Cardiac septum (tissue), 1 donor: ENCODE measurements at regions of chr21 and their contacts with region 1.

Region 1: GRCh38 chr21:42892931-42893755 is at the start of gene NDUFV3:
- DNase-seq: peak; percentile 100
- total RNA-seq, gene NDUFV3: 46.7 TPM

Region 2: DNA sequence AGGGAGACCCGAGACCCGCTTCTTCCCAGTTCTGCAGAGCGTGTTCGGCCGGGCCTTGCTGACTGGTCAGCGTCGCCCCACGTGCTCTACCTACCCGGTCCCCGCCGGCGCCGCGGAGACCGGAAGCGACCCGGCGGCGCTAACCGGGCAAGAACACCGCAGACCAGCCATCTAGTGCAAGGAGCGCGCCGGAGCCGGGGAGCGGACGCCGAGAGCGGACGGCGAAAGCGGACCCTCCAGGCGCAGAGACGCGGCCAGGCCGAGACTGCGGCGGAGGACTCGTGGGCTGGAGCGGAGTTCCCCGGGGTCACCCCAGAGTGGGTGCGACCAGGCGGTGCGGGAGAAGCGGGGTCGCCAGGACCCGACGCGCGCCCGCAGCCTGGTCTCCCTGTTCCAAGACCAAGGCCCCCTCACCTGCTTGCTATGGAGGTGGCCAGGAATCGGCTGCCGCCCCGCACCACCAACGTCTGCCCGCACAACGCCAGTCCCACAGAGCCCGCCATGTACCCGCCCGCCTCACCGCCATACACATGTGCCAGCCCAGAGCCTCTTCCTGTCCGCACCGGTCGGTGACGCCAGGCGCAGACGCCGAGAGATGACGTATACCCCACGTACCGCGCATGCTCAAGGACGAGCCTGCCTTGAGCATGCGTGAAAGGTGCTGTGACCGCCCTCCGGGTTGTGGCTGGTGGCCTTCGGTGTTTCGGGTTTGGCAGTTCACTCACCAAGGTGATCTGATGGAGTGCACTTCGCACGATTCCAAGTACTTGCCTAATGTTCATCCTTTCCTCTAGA is 14.0 kb before region 1 on chr21 and contains the start of gene WDR4:
- intact Hi-C with region 1: loop called (anchors 2 kb)
- DNase-seq: peak; percentile 98
- total RNA-seq, gene WDR4: 8.6 TPM

Region 3: DNA sequence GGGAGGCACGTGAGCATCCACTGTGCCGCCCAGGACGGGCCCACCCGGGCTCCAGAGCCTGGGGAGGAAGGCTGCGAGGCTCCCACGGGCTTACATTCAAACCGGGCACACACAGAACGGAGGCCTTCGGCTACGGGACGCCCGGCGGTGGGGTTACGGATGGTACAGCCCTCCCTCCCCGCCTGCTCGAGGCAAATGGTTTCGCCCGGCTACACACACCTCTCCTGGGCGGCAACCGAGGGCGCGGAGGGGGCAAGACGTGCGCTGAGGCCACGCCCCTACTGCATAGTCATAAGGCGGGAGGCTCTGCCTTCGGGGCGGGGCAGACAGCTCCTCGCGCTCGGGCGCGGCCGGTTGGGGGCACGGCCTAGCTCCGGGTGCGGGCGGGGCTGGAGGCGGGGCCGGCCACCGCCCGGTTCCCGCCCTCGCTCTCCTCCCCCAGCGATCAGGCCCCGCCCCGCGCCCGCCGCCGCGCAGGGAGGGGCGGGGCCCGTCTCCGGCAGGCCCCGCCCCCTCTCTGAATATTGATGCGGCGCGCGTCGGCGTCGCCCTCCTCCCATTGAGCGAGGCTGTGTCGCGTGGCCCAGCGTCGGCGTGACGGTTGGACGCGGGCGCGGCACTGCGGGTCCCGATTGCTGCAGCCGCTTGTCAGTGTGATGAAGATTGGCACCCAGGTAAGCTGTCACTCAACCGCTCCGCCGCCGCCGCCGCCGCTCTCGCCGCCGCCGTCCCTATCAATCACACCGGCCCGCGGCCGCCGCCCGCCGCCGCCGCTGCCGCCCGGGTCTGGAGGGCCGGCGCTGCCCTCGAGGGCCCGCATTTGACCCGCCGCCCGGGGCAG is 81.1 kb after region 1 on chr21 and contains the start of gene PKNOX1:
- intact Hi-C with region 1: loop called (anchors 5 kb)
- DNase-seq: peak; percentile 100
- total RNA-seq, gene PKNOX1: 11.3 TPM